ENCODE measurements at regions of chr16 and their contacts with region 1.

Region 1: DNA sequence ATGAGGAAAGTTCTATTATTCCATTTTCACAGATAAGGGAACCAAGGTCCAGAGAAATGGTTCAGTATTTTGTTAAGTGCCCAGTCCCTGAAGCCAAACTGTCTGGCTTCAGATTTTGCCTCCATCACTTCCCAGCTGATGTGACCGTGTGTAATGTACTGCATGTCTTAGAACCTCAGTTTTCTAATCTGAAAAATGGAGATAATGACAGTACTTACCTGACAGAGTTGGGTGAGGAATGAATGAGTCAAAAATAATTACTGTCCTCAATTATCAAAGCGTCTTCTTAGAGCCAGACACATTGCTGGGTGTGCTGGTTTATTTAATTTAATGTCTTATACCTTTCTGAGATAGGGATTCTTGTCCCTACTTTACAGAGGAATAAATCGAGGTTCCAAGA is 6.7 kb downstream of the ZNF668 start:
- DNase-seq: no peak
- H3K4me3 Mint-ChIP-seq: no peak overlapping the region
- H3K27ac Mint-ChIP-seq: no peak overlapping the region
- H3K4me1 Mint-ChIP-seq: peaks cover 55% of the 10 kb centered on the region
- H3K27me3 Mint-ChIP-seq: no peaks in the 10 kb centered on the region

Region 2: DNA sequence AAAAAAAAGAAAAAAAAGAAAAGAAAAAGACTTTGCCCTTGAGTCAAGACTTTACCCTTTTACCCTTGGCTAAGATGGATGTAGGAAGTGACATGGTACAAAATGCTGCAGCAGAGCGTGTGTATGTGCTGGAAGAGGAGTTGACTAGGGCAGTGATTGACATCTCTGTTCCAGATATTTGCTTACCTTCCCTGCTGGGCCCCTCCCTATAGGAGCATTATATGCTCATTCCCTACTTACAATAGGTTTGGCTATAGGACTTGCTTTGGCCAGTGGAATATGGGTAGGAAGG is 23.2 kb before region 1 on chr16:
- intact Hi-C with region 1: loop called (anchors 1 kb)
- DNase-seq: no peak
- H3K4me3 Mint-ChIP-seq: no peak overlapping the region
- H3K27ac Mint-ChIP-seq: no peak overlapping the region
- H3K4me1 Mint-ChIP-seq: no peaks in the 10 kb centered on the region
- H3K27me3 Mint-ChIP-seq: no peaks in the 10 kb centered on the region

Region 3: GRCh38 chr16:31181102-31181830 is 113.9 kb after region 1 on chr16:
- intact Hi-C with region 1: no loop called
- DNase-seq: peak; percentile 82
- H3K4me3 Mint-ChIP-seq: peak overlapping the region; percentile 100
- H3K27ac Mint-ChIP-seq: peak overlapping the region; percentile 98
- H3K4me1 Mint-ChIP-seq: peaks cover 66% of the 10 kb centered on the region
- H3K27me3 Mint-ChIP-seq: peaks cover 2% of the 10 kb centered on the region